A549 (cell line): ENCODE measurements at regions of chr9 and their contacts with region 1.

Region 1: DNA sequence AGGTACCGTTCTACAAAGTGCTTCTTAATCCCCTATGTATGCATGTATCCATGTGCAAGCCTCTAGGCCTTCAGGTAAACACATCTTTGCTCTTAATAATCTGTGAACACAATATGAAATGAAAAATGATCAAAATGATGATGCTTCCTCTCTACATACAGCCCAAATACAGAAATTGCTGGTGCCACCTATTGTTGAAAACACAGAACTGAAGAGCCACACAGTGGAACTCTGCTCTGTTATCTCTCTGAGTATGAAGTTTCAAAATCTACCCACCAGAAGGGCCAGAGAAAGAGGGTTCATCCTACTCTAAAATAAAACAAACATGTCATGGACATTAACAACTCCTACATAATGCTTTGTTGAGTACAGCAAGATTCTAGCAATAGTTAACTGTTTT is 71.3 kb downstream of the GLIS3 start:
- DNase-seq: peak in 1 of 2 experiments; percentile 60
- ATAC-seq: peak; percentile 94
- H3K4me3 ChIP-seq: no peak overlapping the region; the same call in 2 of the 3 replicates
- H3K27ac ChIP-seq: peak overlapping the region; percentile 74 to 84
- H3K4me1 ChIP-seq: peaks cover 82% of the 10 kb centered on the region
- CTCF ChIP-seq: peak; percentile 80
- EP300 ChIP-seq: no peak
- POLR2A ChIP-seq: no peak
- RAD21 ChIP-seq: peak; percentile 83 to 88

Region 2: DNA sequence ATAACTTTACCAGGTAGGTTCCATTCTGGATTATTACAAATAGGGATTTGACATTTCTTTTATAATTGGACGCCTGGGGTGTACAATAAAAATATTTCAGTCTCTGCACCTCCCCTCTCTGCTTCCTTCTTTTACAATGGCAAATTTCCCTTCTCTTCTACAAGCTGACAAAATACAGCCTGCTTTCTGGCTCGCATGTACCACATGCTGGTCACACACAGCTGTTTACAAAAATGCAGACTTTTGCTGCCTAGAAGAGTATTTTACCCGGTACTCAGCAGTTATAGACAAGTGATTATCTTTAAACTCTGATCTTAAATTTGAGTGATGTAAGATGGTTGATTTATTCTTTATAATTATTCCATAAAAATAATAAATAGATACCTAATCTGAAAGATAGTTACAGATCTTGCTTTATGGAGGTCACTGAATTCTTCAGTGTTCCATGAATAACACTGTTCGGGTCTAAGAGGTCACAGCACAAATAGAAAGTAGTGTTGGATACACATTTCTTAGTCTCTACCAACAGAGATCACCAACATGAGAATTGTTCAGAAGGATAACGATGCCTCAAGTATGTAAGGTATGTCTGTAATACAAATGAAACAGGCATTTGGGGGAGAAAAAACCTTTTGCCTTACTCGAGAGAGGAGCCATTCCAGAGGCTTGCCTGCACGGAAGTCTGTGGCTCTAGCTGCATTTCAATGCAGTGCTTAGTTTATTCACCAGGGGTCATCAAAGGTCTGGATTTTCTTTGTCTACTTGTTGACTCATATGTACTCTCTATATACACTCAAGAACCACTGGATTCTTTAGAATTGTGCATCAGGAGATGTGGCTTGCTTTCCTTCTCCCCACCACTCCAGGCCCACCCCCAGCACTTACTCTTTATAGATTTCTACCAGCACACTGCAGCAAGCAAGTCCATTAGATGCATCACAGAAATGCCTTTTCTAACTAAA is 496.2 kb before region 1 on chr9:
- CTCF ChIA-PET with region 1: interaction called, 21 read pairs
- POLR2A ChIA-PET with region 1: interaction called, 3 read pairs
- DNase-seq: peak; percentile 78 to 83
- ATAC-seq: peak; percentile 100
- H3K4me3 ChIP-seq: no peak overlapping the region
- H3K27ac ChIP-seq: peak overlapping the region; percentile 52 to 69
- H3K4me1 ChIP-seq: peaks cover 8% of the 10 kb centered on the region
- CTCF ChIP-seq: peak; percentile 90
- EP300 ChIP-seq: no peak
- POLR2A ChIP-seq: no peak
- RAD21 ChIP-seq: peak; percentile 97 to 98

Region 3: GRCh38 chr9:4055032-4055431 is 173.6 kb before region 1 on chr9:
- CTCF ChIA-PET with region 1: interaction called, 11 read pairs
- POLR2A ChIA-PET with region 1: no interaction called
- DNase-seq: no peak
- ATAC-seq: no peak
- H3K4me3 ChIP-seq: no peak overlapping the region
- H3K27ac ChIP-seq: no peak overlapping the region
- H3K4me1 ChIP-seq: no peaks in the 10 kb centered on the region
- CTCF ChIP-seq: no peak
- EP300 ChIP-seq: no peak
- POLR2A ChIP-seq: no peak
- RAD21 ChIP-seq: no peak

Region 4: GRCh38 chr9:4137234-4137633 is 91.4 kb before region 1 on chr9:
- CTCF ChIA-PET with region 1: interaction called, 11 read pairs
- POLR2A ChIA-PET with region 1: no interaction called
- DNase-seq: peak; percentile 65 to 91
- ATAC-seq: peak; percentile 87 to 91
- H3K4me3 ChIP-seq: 0 out of 3 replicates have a peak overlapping the region, but pooled peaks have one; percentile 15
- H3K27ac ChIP-seq: peak overlapping the region; percentile 85 to 91
- H3K4me1 ChIP-seq: peaks cover 70% of the 10 kb centered on the region
- CTCF ChIP-seq: no peak
- EP300 ChIP-seq: peak; percentile 70 to 77; a peak in 2 of 5 replicates
- POLR2A ChIP-seq: no peak
- RAD21 ChIP-seq: peak in 1 of 2 experiments; percentile 28; a peak in 2 of 5 replicates

Region 5: DNA sequence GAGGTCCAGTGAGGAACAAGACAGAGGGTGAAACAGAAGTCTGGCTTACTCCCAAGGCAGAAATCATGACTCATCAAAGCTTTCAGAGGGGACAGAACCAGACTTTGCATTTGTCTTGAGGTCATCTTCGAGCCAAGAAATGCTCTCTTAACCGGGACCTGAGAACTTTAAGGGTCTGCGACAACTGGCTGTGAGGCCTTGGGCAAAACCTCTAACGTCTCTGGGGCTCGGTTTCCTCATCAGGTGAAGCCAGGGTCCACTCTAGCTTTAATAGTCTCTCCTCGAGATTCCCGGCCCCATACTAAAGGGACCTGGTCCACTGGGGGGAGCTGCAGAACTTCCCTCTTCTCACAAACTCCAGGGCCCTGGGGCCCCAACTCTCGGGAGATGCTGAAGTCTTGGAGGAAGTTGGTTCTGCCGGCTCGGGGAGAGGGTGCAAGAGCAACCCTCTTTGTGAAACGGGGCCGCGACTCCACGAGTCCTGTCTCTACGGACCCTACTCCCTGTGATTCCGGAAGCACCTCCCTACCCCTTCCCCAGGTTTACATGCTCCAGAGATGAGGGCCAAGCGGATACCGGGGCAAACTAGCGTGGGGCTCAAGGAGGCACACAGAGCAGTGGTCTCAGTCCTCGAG is 68.7 kb after region 1 on chr9:
- CTCF ChIA-PET with region 1: interaction called, 6 read pairs
- POLR2A ChIA-PET with region 1: interaction called, 10 read pairs
- DNase-seq: peak; percentile 87 to 92
- ATAC-seq: peak; percentile 60 to 73
- H3K4me3 ChIP-seq: peak overlapping the region; percentile 77
- H3K27ac ChIP-seq: peak overlapping the region; percentile 95 to 97
- H3K4me1 ChIP-seq: peaks cover 64% of the 10 kb centered on the region
- CTCF ChIP-seq: peak; percentile 64
- EP300 ChIP-seq: no peak
- POLR2A ChIP-seq: no peak; the same call in 1 of the 2 replicates
- RAD21 ChIP-seq: peak; percentile 60 to 65